Activated T-helper 2 cell treated with anti-CD3 and anti-CD28 coated beads, Interferon-gamma antibody, Interleukin-2, Interleukin-4, amounts not matched to agents 10 μg/mL and 5 μg/mL and 100 μg/mL, durations not matched to agents 14 hours and 24 hours and 36 hours (primary cell): ENCODE measurements at regions of chr17 and their contacts with region 1.

Region 1: DNA sequence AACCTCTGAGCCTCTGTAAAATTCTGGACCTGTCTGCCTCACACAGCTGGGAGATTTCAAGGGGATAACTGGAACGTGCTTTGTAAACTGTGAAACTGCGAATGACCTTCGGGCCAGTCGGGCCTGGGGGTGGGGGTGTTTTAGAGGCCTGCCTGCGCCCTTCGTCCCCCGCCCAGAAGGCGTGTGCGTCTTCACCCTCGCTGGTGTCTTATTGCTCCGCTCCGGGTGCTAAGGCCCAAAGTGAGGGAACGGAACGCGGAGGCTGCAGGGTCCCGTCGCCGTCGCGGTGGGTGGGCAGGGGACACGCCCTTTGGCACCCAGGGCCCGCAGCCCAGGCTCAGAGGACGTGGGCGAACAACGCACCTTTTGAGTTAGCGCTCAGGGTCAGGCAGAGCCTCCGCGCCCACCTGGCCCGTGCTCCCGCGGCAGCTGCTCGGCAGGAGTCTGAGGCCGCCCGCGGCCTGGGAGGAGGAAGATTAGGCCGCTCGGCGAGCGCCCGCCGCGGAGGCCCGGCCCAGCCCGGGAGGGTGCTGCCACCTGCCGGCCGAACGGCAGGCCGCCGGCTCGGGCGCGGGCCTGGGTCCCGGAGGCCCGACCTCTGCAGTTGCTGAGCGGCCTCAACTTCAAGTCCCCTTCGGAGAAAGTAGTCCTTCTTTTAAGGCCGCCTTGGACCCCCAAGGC is 29.7 kb downstream of the DCAKD start:
- DNase-seq: peak; percentile 56
- H3K4me3 Mint-ChIP-seq: peak overlapping the region; percentile 24
- H3K27ac Mint-ChIP-seq: no peak overlapping the region
- H3K4me1 Mint-ChIP-seq: peaks cover 19% of the 10 kb centered on the region
- H3K27me3 Mint-ChIP-seq: peaks cover 29% of the 10 kb centered on the region

Region 2: DNA sequence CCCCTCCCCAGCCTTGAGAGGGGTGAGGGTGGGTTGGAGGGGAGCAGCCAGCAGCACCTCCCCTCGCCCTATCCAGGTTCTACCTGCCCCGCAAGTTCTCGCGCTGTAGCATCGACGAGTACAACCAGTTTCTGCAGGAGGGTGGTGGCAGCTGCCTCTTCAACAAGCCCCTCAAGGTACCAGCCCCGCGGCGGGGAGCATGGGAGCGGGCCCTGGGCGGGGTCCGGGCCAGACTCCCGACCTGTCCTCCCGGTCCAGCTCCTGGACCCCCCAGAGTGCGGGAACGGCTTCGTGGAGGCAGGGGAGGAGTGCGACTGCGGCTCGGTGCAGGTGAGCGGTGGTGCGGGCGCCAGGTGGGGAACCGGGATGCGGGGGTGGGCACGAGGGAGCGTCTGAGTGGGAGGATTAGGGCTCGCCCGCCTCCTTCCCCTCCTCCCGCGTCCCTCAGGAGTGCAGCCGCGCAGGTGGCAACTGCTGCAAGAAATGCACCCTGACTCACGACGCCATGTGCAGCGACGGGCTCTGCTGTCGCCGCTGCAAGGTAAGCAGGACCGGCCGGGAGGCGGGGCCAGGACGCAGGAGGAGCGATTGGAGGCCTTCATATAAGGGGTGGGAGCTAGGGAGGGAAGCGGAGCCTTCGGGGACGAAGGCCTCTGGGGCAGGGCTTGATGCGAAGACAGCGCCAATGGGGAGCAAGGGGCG is 246.5 kb before region 1 on chr17:
- intact Hi-C with region 1: loop called (anchors 1 kb)
- DNase-seq: peak; percentile 97
- H3K4me3 Mint-ChIP-seq: peak overlapping the region; percentile 83
- H3K27ac Mint-ChIP-seq: no peak overlapping the region
- H3K4me1 Mint-ChIP-seq: peaks cover 7% of the 10 kb centered on the region
- H3K27me3 Mint-ChIP-seq: peaks cover 10% of the 10 kb centered on the region

Region 3: GRCh38 chr17:44919885-44920564 is 101.7 kb before region 1 on chr17:
- intact Hi-C with region 1: loop called (anchors 1 kb)
- DNase-seq: peak; percentile 50
- H3K4me3 Mint-ChIP-seq: no peak overlapping the region
- H3K27ac Mint-ChIP-seq: no peak overlapping the region
- H3K4me1 Mint-ChIP-seq: no peaks in the 10 kb centered on the region
- H3K27me3 Mint-ChIP-seq: peaks cover 26% of the 10 kb centered on the region

Region 4: DNA sequence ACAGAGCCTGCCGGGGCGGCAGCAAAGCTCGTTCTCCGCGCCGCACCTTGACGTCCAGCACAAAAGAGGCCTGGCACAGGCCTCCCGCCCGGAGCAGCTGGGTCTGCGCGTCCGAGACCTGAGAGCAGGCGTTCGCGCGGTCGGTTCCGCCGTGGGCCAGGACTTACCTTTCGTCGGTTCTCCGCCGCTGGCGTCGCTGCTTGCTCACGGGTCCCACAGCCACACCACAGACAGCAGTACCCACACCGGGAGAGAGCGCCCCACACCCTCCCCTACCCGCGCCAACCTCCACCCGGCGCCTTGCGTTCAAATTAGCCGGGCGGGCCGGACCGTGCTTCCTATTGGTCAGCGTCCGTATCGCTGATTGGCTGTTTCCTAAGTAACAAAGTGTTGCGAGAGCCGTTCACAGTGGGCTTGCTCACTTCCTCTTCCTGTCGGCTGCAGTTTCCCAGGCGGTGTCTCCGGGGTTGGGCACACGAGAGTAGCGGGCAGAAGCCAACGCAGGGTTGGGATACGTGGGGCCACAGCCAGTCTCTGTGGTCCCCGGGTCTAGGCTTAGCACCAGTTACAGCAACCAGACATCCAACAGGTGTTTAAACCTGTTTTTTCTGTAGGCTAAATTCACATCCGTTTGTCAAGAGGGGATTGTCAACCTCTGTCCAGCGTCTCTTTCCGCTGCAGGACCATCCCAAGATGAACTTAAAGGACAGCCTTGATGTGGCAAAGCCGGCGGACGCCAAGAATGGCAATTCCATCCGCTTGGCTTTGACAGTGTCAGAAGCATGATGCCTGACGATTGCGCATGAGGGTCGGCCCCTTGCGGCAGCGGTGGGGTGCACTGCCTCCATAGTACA is 74.1 kb before region 1 on chr17 and contains the start of gene KIF18B:
- intact Hi-C with region 1: loop called (anchors 5 kb)
- DNase-seq: peak; percentile 91
- H3K4me3 Mint-ChIP-seq: peak within 1 kb of the TSS; percentile 93
- H3K27ac Mint-ChIP-seq: peak within 1 kb of the TSS; percentile 78
- H3K4me1 Mint-ChIP-seq: peaks cover 32% of the 10 kb centered on the region
- H3K27me3 Mint-ChIP-seq: no peaks in the 10 kb centered on the region
- total RNA-seq, gene KIF18B: 46.7 and 47.1 TPM in 2 replicates

Region 5: DNA sequence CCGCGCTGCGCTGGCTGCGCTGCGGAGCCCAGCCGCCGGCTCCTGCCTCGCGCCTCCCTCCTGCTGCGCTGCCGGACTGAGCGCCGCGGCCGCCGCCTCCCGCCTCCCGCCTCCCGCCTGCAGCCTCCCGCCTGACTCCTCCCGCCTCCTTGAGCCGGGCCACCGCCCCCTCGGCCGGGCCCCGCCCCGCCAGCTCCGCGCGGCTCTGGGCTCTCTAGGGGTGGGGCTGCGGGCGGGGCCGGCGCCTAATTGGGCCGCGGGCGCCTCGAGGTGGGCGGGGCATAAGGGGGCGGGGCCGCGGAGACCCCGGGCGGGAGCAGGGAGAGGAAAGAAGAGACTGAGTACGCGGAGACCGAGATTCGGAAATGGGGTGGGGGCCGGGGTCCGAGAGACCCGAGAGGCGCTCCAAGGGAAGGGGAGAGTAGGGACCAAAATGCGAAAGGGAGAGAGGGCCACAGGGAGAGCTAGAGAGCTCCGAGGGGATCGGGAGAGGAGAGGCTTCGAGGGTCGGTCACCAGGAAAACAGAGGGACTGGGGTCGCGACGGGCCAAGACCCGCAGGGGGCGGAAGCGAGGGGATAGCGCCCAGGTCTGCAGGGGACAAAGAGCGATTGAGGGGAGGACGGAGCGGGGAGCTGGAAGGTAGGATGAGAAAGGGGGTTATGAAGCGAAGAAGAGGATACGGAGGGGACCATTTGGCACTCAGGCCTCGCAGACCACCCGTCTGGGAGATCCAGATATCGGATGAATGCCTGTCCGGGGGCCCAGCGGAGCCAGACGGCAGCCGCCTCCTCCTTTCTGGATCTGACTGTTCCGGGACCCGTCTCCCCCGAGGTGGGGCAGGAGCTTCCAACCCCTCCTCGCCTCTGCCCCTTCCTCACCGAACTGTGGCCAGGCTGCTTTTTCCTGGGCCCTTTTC is 53.3 kb before region 1 on chr17 and contains the start of gene C1QL1:
- intact Hi-C with region 1: loop called (anchors 5 kb)
- DNase-seq: peak; percentile 83
- H3K4me3 Mint-ChIP-seq: peak within 1 kb of the TSS; percentile 77
- H3K27ac Mint-ChIP-seq: no peak within 1 kb of the TSS
- H3K4me1 Mint-ChIP-seq: peaks cover 30% of the 10 kb centered on the region
- H3K27me3 Mint-ChIP-seq: peaks cover 59% of the 10 kb centered on the region
- total RNA-seq, gene C1QL1: 0.41 and 0.48 TPM in 2 replicates